CD4-positive, alpha-beta memory T cell (primary cell): ENCODE measurements at regions of chr13 and their contacts with region 1.

Region 1: DNA sequence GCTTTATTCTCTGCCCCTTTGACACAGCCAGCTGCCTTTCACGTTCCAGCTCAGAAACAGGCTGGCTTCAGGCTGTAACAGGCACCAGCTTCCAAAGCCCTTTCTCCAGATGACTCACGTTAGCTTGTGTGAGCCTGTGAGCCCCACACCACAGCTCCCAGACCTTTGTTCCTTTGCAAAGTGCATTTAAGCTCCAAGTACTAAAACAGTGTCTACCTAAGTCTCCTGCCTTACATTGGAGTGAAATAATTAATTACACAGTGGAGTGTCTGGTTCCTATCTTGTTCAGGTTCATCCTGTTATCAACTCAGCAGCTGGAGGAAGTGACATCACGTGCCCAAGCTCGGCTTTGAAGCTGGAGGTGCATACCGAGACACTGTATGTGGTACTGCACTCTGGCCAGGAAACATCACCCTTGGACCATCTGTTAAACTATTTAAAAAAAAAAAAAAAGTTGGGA is 475.8 kb downstream of the FOXO1 start:
- DNase-seq: peak; percentile 70 to 88 (median 75)
- H3K4me3 ChIP-seq: peak overlapping the region in 1 of 2 donors; percentile 37
- H3K4me3 Mint-ChIP-seq: peak overlapping the region; percentile 11 to 90 (median 83)
- H3K27ac ChIP-seq: peak overlapping the region; percentile 56
- H3K27ac Mint-ChIP-seq: peak overlapping the region; percentile 95 to 98 (median 96)
- H3K4me1 ChIP-seq: peaks cover 68% of the 10 kb centered on the region
- H3K4me1 Mint-ChIP-seq: peaks cover 61 to 79% (median 69%) of the 10 kb centered on the region in 4 donors
- H3K27me3 ChIP-seq: no peaks in the 10 kb centered on the region
- H3K27me3 Mint-ChIP-seq: no peaks in the 10 kb centered on the region

Region 2: GRCh38 chr13:39942552-39943273 is 248.0 kb before region 1 on chr13:
- CTCF ChIA-PET with region 1: interaction called, 3 read pairs
- POLR2A ChIA-PET with region 1: no interaction called
- intact Hi-C with region 1: loop called (anchors 5 kb)
- DNase-seq: peak; percentile 55 to 67 (median 63)
- H3K4me3 ChIP-seq: no peak overlapping the region
- H3K4me3 Mint-ChIP-seq: peak overlapping the region in 1 of 8 donors; percentile 20
- H3K27ac ChIP-seq: no peak overlapping the region
- H3K27ac Mint-ChIP-seq: peak overlapping the region in 1 of 7 donors; percentile 43
- H3K4me1 ChIP-seq: no peaks in the 10 kb centered on the region
- H3K4me1 Mint-ChIP-seq: peaks cover 3 to 13% (median 6%) of the 10 kb centered on the region in 4 donors
- H3K27me3 ChIP-seq: no peaks in the 10 kb centered on the region
- H3K27me3 Mint-ChIP-seq: peaks cover 0 to 1% of the 10 kb centered on the region in 2 donors

Region 3: GRCh38 chr13:40149611-40150274 is 40.9 kb before region 1 on chr13:
- CTCF ChIA-PET with region 1: interaction called, 3 read pairs
- POLR2A ChIA-PET with region 1: interaction called, 17 read pairs
- intact Hi-C with region 1: loop called (anchors 5 kb)
- DNase-seq: no peak
- H3K4me3 ChIP-seq: no peak overlapping the region
- H3K4me3 Mint-ChIP-seq: no peak overlapping the region
- H3K27ac ChIP-seq: no peak overlapping the region
- H3K27ac Mint-ChIP-seq: peak overlapping the region in 5 of 7 donors; percentile 56 to 77 (median 60)
- H3K4me1 ChIP-seq: peaks cover 40% of the 10 kb centered on the region
- H3K4me1 Mint-ChIP-seq: peaks cover 43 to 75% (median 54%) of the 10 kb centered on the region in 4 donors
- H3K27me3 ChIP-seq: no peaks in the 10 kb centered on the region
- H3K27me3 Mint-ChIP-seq: no peaks in the 10 kb centered on the region

Region 4: GRCh38 chr13:40221460-40222201 is 31.0 kb after region 1 on chr13:
- CTCF ChIA-PET with region 1: interaction called, 9 read pairs
- POLR2A ChIA-PET with region 1: interaction called, 33 read pairs
- intact Hi-C with region 1: loop called (anchors 1 kb)
- DNase-seq: peak; percentile 82 to 89 (median 85)
- H3K4me3 ChIP-seq: no peak overlapping the region
- H3K4me3 Mint-ChIP-seq: peak overlapping the region; percentile 51 to 86 (median 76)
- H3K27ac ChIP-seq: peak overlapping the region; percentile 54
- H3K27ac Mint-ChIP-seq: peak overlapping the region; percentile 90 to 99 (median 97)
- H3K4me1 ChIP-seq: peaks cover 44% of the 10 kb centered on the region
- H3K4me1 Mint-ChIP-seq: peaks cover 40 to 59% (median 52%) of the 10 kb centered on the region in 4 donors
- H3K27me3 ChIP-seq: no peaks in the 10 kb centered on the region
- H3K27me3 Mint-ChIP-seq: no peaks in the 10 kb centered on the region

Region 5: GRCh38 chr13:40251343-40252032 is 60.8 kb after region 1 on chr13:
- CTCF ChIA-PET with region 1: no interaction called
- POLR2A ChIA-PET with region 1: no interaction called
- intact Hi-C with region 1: no loop called
- DNase-seq: no peak
- H3K4me3 ChIP-seq: no peak overlapping the region
- H3K4me3 Mint-ChIP-seq: no peak overlapping the region
- H3K27ac ChIP-seq: no peak overlapping the region
- H3K27ac Mint-ChIP-seq: peak overlapping the region in 2 of 7 donors; percentile 4 to 52
- H3K4me1 ChIP-seq: peaks cover 4% of the 10 kb centered on the region
- H3K4me1 Mint-ChIP-seq: peaks cover 4 to 11% (median 7%) of the 10 kb centered on the region in 4 donors
- H3K27me3 ChIP-seq: no peaks in the 10 kb centered on the region
- H3K27me3 Mint-ChIP-seq: no peaks in the 10 kb centered on the region

Region 6: DNA sequence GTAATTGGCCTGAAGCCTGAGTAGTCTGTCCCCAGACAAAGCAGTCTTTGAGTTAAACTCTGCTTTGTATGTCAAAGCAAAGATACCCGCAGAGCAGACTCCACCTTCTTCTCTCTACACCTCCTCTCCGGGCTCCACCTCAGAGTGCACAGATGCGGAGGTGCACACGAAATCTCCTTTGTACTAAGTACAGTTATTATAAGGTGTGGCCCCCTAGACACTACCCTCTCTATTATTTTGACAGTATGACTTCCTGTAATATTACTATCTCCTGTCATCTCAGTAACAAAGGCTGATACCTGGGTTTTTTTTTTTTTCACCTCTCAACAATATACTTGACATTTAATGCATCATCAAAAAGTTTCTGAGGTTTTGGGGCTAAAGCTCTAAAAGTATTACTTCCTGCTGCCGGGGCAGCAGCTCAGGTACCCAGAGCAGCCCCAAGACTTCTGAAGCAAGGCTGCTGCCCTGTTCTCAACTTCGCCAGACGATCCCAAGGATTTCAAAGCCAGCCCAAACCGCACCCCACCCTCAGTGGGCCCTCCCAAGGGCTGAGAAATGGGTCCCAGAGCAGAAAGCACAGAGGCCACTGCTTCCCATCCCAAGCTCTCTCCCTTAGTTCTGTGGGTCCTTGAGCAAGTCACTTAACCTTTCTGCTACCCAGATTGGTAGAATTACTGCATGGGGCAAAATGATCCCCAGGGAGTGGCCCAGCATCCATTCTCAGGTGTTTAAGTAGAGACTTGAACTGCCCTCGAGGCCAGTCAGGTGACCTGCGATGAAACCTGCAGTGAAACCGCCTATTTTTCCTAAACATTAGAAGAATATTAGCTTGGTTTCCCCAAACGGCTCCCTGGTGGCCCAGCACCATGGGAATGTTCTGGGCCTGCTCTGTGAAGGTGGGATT is 295.2 kb after region 1 on chr13:
- CTCF ChIA-PET with region 1: interaction called, 4 read pairs
- POLR2A ChIA-PET with region 1: interaction called, 6 read pairs
- intact Hi-C with region 1: loop called (anchors 1 kb)
- DNase-seq: peak; percentile 81 to 92 (median 91)
- H3K4me3 ChIP-seq: peak overlapping the region; percentile 0 to 29
- H3K4me3 Mint-ChIP-seq: peak overlapping the region; percentile 59 to 93 (median 82)
- H3K27ac ChIP-seq: peak overlapping the region; percentile 68
- H3K27ac Mint-ChIP-seq: peak overlapping the region; percentile 89 to 99 (median 98)
- H3K4me1 ChIP-seq: peaks cover 87% of the 10 kb centered on the region
- H3K4me1 Mint-ChIP-seq: peaks cover 53 to 96% (median 85%) of the 10 kb centered on the region in 4 donors
- H3K27me3 ChIP-seq: no peaks in the 10 kb centered on the region
- H3K27me3 Mint-ChIP-seq: no peaks in the 10 kb centered on the region

Region 7: DNA sequence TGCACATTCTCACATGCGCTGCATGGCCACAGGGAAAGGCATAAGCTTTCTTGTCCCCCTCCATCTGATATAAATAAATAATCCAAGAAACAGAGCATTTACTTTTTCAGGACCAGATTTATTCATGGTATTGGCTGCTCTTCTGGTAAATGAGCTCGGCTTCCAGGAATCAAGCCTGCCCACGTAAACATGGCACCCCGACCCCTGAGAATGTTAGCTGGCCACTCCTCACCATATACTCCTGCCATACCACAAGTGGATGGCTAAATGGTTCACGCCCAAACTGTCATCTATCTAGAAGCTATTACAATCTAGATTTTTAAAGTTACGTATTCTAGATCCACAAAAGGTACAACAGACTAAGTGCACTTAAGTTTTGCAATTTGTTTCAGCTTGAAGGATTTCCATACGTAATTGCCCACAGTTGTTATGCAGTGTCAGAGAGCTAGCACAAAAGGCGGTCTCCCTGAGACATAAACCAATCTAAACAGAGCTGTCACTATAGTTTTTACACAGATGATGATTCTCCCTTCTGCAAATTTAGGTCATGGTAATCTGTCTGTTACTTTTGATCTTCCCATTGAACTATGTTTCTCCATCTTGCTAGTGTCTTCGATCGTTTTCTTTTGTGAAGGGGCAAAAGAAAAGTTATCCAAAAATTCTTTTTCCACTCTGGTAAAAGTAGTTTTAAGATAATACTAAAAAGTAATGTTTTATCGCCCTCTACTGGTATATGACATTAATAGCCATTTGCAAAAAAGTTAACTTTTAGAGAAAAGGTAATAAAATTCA is 492.0 kb after region 1 on chr13:
- CTCF ChIA-PET with region 1: interaction called, 11 read pairs
- POLR2A ChIA-PET with region 1: interaction called, 5 read pairs
- intact Hi-C with region 1: loop called (anchors 5 kb)
- DNase-seq: peak in 4 of 5 donors; percentile 44 to 58 (median 52)
- H3K4me3 ChIP-seq: no peak overlapping the region
- H3K4me3 Mint-ChIP-seq: peak overlapping the region in 1 of 8 donors; percentile 46
- H3K27ac ChIP-seq: no peak overlapping the region
- H3K27ac Mint-ChIP-seq: peak overlapping the region in 1 of 7 donors; percentile 48
- H3K4me1 ChIP-seq: peaks cover 4% of the 10 kb centered on the region
- H3K4me1 Mint-ChIP-seq: peaks cover 5 to 8% (median 6%) of the 10 kb centered on the region in 4 donors
- H3K27me3 ChIP-seq: no peaks in the 10 kb centered on the region
- H3K27me3 Mint-ChIP-seq: no peaks in the 10 kb centered on the region

Region 8: DNA sequence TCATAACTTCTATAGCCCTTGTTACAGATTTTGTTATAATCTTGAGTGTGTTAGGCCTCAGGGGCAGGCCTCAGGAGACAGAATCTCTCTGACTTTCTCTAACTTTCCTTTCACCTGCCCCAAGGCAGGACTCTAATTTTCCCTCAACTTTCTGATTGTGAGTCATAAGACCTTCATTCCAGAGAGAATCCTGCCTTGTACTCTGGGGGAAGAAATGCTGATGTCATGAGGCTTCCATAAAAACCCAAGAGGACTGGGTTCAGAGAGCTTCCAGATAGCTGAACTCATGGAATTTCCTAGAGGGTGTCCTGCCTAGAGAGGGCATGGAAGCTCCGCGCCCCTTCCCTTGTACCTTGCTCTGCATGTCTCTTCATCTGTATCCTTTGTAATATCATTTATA is 947.3 kb after region 1 on chr13:
- CTCF ChIA-PET with region 1: no interaction called
- POLR2A ChIA-PET with region 1: no interaction called
- intact Hi-C with region 1: no loop called
- DNase-seq: no peak
- H3K4me3 ChIP-seq: no peak overlapping the region
- H3K4me3 Mint-ChIP-seq: no peak overlapping the region
- H3K27ac ChIP-seq: no peak overlapping the region
- H3K27ac Mint-ChIP-seq: no peak overlapping the region
- H3K4me1 ChIP-seq: peaks cover 8% of the 10 kb centered on the region
- H3K4me1 Mint-ChIP-seq: peaks cover 9 to 14% (median 10%) of the 10 kb centered on the region in 4 donors
- H3K27me3 ChIP-seq: no peaks in the 10 kb centered on the region
- H3K27me3 Mint-ChIP-seq: no peaks in the 10 kb centered on the region